ENCODE measurements at regions of chr15 and their contacts with region 1.

Region 1: DNA sequence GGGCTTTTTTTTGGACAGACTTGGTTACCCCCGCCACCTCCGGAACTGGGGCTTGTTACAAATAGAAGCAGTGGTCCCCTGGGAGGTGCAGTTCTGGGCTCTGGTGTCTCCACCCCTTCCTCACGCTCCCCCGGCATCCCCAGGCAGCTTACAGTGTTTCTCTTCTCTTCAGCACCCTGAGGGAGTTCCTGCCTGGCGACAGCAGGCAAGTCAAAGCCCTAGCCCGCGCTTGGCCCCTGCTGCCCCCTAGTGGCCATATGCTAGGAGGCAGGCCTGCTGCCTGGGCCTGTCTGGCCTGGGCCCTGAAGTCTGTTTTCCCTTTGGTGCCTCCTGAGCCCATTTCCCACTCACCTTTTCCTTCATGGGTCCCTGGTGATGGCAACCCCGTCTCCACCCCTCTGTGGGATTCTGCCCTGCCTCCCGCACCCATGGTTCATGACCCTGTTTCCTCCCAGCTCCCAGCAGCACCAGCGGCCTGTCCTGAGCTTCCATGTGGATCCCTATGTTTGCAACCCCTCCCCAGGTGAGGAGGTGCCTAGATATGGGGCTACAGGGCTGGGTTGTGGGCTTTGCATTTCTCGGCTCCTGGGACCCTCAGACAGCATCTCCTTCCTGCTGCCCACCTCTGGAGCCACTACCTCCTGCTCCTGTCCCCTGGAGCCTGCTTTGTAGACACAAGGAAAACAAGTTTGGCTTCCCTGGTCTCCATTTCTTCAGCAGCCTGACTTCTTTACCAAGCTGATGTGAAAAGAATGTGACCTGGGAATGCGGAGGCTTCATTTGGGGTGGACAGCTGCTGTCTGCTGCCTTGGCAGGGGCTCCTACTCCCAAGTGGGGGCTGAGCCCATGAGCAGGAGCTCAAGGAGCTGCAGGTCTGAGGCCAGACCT is 2.2 kb downstream of the SNX22 start:
- DNase-seq: peak; percentile 95
- ATAC-seq: peak; percentile 84

Region 2: GRCh38 chr15:64093627-64094417 is 59.9 kb before region 1 on chr15 and contains the start of gene CIAO2A:
- intact Hi-C with region 1: loop called (anchors 5 kb)
- DNase-seq: peak; percentile 95
- ATAC-seq: peak; percentile 89
- total RNA-seq, gene CIAO2A: 66.7 TPM

Region 3: DNA sequence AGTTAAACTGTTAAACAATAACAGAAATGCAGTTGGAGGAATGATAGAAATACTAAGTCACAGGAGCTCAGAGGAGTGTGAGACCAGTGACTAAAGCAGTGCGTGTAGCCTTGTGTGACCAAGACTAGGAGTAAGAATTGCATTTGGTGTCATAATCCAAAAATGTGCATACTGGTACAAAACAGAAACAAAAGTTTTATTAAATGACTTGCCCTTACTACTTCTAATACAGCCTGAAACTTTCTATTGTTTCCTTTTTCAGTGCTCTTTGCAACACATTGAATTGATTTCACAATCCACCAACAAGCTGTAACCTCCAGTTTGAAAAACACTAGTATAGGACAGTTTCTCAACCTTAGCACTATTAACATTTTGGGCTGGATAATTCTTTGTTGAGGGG is 40.8 kb before region 1 on chr15:
- intact Hi-C with region 1: loop called (anchors 5 kb)
- DNase-seq: no peak
- ATAC-seq: no peak